Activated CD4-positive, alpha-beta T cell treated with anti-CD3 and anti-CD28 coated beads for 36 hours (primary cell): ENCODE measurements at regions of chr1 and their contacts with region 1.

Region 1: GRCh38 chr1:12019858-12020509 is 686 bp downstream of the MIIP start:
- DNase-seq: no peak
- ATAC-seq: no peak
- H3K4me3 Mint-ChIP-seq: peak overlapping the region; percentile 83
- H3K27ac Mint-ChIP-seq: peak overlapping the region; percentile 74
- H3K4me1 Mint-ChIP-seq: peaks cover 2% of the 10 kb centered on the region
- H3K27me3 Mint-ChIP-seq: no peaks in the 10 kb centered on the region

Region 2: GRCh38 chr1:11925938-11926292 is 94.1 kb before region 1 on chr1:
- CTCF ChIA-PET with region 1: no interaction called
- POLR2A ChIA-PET with region 1: no interaction called
- intact Hi-C with region 1: loop called in 1 of 2 experiments (anchors 1 kb)
- DNase-seq: no peak
- ATAC-seq: peak; percentile 21
- H3K4me3 Mint-ChIP-seq: peak overlapping the region; percentile 77
- H3K27ac Mint-ChIP-seq: no peak overlapping the region
- H3K4me1 Mint-ChIP-seq: peaks cover 30% of the 10 kb centered on the region
- H3K27me3 Mint-ChIP-seq: no peaks in the 10 kb centered on the region

Region 3: GRCh38 chr1:11934302-11935056 is 85.5 kb before region 1 on chr1 and contains the start of gene PLOD1:
- CTCF ChIA-PET with region 1: no interaction called
- POLR2A ChIA-PET with region 1: no interaction called
- intact Hi-C with region 1: loop called in 1 of 2 experiments (anchors 1 kb)
- DNase-seq: peak; percentile 88
- ATAC-seq: peak; percentile 98
- H3K4me3 Mint-ChIP-seq: peak within 1 kb of the TSS; percentile 75
- H3K27ac Mint-ChIP-seq: no peak within 1 kb of the TSS
- H3K4me1 Mint-ChIP-seq: peaks cover 4% of the 10 kb centered on the region
- H3K27me3 Mint-ChIP-seq: no peaks in the 10 kb centered on the region
- total RNA-seq, gene PLOD1: 11.7 to 11.9 TPM

Region 4: GRCh38 chr1:11979851-11980675 is 39.9 kb before region 1 on chr1 and contains the start of gene MFN2:
- CTCF ChIA-PET with region 1: interaction called, 8 read pairs
- POLR2A ChIA-PET with region 1: no interaction called
- intact Hi-C with region 1: loop called (anchors 1 kb)
- DNase-seq: peak; percentile 96
- ATAC-seq: peak; percentile 93
- H3K4me3 Mint-ChIP-seq: peak within 1 kb of the TSS; percentile 97
- H3K27ac Mint-ChIP-seq: peak within 1 kb of the TSS; percentile 94
- H3K4me1 Mint-ChIP-seq: peaks cover 36% of the 10 kb centered on the region
- H3K27me3 Mint-ChIP-seq: no peaks in the 10 kb centered on the region
- total RNA-seq, gene MFN2: 52.5 to 71.6 TPM

Region 5: DNA sequence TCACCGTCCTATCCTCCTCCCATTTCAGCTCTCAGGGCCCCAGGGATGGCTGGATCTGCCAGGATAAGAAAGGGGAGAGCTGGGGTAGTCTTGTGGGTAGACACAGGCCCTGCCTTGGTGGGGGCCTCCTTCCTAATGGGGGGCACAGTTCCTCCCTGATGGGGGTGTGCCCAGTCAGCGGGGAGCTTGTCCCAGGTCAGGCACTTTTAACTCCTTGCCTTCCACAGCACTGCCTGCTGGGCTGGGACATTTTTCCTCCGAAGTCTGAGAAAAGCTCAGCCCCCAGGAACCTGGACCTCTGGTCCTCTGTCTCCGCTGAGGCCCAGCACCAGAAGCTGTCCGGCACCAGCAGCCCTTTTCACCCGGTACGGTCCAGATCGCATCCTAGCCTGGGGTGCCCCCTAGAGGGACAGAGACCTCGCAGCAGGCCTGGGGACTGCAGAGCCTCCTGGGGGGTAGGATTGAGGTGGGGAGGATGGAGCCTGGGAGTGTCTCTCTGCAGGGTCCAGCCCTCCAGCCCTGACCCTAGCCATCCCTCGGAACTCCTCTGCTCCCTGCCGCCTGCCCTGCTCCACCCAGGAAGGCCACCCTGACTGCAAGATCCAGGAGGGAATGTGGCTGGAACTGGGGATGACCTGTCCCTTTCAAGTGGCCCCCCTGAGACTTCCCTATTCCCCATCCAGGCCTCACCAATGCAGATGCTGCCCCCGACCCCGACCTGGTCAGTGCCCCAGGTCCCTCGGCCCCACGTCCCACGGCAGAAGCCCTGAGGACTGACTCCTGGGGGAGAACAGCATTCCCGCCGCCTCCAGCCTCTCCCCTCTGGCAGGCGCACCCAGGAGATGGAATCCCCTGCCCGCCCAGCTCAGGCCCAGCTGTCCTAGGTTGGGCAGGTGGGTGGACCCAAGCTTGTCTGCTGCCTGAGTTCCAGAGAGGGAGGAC is 11.3 kb after region 1 on chr1:
- CTCF ChIA-PET with region 1: interaction called, 10 read pairs
- POLR2A ChIA-PET with region 1: no interaction called
- intact Hi-C with region 1: no loop called
- DNase-seq: peak; percentile 73
- ATAC-seq: peak; percentile 88
- H3K4me3 Mint-ChIP-seq: no peak overlapping the region
- H3K27ac Mint-ChIP-seq: no peak overlapping the region
- H3K4me1 Mint-ChIP-seq: no peaks in the 10 kb centered on the region
- H3K27me3 Mint-ChIP-seq: no peaks in the 10 kb centered on the region

Region 6: DNA sequence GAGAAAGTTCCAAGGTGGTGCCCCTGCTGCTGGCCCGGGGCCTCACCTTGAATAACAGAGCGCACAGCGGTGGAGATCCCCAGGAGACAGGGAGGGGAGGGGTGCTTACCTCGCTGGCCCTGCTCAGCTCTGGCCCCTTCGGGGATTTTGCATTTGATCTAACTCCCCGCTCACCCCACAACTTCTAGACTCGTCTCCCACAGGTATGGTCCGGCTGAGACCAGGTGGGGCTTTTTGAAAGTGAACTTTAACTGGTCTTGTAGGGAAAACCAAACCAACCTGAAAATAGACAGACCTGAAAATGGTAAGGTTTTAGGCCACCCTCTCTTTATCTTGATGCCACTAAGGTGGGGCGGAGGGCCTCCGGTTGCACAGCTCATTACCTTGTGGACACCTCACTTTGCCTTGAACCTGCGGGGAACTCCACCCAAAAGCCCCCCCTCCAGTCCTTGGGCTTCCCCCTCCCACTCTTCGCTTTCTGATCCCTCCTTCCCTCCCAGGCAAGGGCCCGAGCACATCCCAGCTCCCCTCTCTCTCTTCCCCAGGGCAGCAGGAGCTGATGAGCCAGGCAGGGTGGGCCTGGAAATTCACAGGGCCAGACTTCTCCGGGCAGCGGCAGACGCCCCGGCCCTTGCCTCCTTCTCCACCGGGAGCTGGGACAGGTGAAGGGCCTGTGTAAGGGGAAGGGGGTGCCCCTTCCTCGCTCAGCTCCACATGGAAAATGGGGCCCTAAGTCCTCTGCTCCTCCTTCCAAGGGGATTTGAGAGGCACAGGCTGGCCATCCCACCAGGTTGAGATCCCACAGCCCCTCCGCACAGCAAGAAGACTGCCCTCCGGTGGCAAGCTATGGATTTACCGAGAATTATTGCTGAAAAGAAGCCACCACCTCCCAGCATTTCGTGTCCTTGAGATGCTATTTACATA is 59.2 kb after region 1 on chr1:
- CTCF ChIA-PET with region 1: interaction called, 12 read pairs
- POLR2A ChIA-PET with region 1: no interaction called
- intact Hi-C with region 1: no loop called
- DNase-seq: peak; percentile 77
- ATAC-seq: peak; percentile 79
- H3K4me3 Mint-ChIP-seq: no peak overlapping the region
- H3K27ac Mint-ChIP-seq: peak overlapping the region; percentile 67
- H3K4me1 Mint-ChIP-seq: peaks cover 24% of the 10 kb centered on the region
- H3K27me3 Mint-ChIP-seq: peaks cover 5% of the 10 kb centered on the region

Region 7: DNA sequence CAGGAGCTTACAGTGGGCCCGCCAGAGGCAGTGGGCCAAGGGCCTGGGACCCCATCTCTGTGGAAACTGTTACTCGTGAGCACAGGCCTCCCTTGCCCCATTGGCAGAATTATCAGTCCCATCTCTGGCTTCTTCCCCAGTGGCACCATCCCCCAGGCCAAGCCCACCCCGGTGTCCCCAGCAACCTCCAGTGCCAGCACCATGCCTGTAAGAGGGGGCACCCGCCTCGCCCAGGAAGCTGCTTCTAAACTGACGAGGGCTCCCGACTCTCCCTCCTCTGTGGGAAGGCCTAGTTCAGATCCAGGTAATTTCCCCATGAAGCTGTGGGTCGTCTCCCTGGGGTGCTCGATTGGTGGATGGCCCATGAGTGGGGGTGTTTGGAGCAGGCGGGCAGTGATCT is 89.9 kb after region 1 on chr1:
- CTCF ChIA-PET with region 1: no interaction called
- POLR2A ChIA-PET with region 1: no interaction called
- intact Hi-C with region 1: no loop called
- DNase-seq: no peak
- ATAC-seq: no peak
- H3K4me3 Mint-ChIP-seq: no peak overlapping the region
- H3K27ac Mint-ChIP-seq: no peak overlapping the region
- H3K4me1 Mint-ChIP-seq: peaks cover 5% of the 10 kb centered on the region
- H3K27me3 Mint-ChIP-seq: no peaks in the 10 kb centered on the region

Region 8: DNA sequence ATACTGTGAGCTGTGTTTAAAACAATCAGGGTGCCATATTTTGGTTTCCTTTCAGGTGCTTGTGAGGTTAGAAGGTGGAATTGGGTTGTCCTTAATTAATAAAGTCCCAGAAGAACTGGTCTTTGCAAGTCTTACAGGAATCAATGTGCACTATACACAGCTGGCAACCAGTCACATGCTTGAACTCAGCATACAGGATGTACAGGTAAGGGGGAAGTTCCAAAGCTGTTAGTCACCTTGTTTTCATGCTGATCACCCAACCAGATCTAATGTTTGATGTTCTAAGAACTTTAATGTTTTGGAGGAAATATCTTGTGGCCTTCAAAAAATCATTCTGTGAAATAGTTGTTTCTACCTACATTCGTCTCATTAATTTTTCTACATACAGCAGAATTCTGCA is 366.1 kb after region 1 on chr1:
- CTCF ChIA-PET with region 1: no interaction called
- POLR2A ChIA-PET with region 1: no interaction called
- intact Hi-C with region 1: no loop called
- DNase-seq: peak; percentile 25
- ATAC-seq: peak; percentile 84
- H3K4me3 Mint-ChIP-seq: no peak overlapping the region
- H3K27ac Mint-ChIP-seq: peak overlapping the region; percentile 59
- H3K4me1 Mint-ChIP-seq: peaks cover 42% of the 10 kb centered on the region
- H3K27me3 Mint-ChIP-seq: no peaks in the 10 kb centered on the region